OCI-LY7 (cell line): ENCODE measurements at regions of chrX and their contacts with region 1.

Region 1: DNA sequence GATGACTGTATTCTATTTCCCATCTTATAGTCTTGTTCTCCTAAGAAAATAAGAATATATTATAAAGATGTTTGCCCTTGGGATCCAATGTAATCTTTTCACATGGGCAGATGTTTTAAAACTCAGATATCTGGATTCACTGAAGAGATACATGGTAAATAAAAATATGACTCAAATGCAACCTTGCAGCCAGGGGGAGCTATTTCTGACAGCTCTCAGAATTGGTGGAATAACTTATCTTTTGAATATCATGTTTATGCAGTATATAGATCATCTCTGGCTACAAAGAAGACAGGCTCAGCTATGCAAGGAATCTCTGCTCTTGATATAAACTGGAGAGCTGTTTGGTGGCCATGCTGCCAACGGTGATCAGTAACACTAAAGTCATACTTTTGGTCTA is 274.7 kb downstream of the GLUD2 start:
- DNase-seq: peak; percentile 4
- H3K4me3 ChIP-seq: no peak overlapping the region
- H3K27ac ChIP-seq: no peak overlapping the region
- H3K4me1 ChIP-seq: no peaks in the 10 kb centered on the region
- CTCF ChIP-seq: peak; percentile 72

Region 2: DNA sequence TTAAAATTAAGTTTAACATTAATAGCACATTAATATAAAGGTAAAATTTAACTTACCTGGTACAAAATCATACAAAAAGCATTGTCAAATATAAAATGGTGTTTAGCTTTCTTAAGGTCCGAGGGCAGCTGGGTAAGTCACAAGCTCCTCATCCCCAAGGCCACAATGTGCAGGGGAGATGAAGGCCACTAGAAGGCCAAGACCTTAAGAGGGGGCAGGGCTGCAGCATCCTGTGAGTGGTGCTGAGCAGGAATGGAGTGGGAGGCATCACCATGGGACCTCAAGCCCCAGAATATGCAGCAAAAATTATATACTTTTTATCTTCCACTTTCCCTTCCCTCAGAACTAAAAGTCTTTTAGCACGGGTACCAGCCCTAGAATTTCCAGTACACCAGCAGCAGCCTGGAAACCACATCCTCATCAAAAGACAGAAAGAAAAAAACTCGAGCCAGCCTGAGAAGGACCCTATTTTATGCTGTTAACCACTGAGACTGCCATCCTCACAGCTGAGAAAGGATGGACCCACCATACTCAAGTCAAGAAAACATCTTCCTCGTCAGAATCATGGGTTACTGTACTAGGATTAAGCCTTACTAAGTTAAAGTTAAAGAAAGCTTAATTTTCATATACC is 1176.7 kb before region 1 on chrX:
- CTCF ChIA-PET with region 1: no interaction called
- POLR2A ChIA-PET with region 1: no interaction called
- intact Hi-C with region 1: no loop called
- DNase-seq: no peak
- H3K4me3 ChIP-seq: no peak overlapping the region
- H3K27ac ChIP-seq: no peak overlapping the region
- H3K4me1 ChIP-seq: no peaks in the 10 kb centered on the region
- CTCF ChIP-seq: no peak

Region 3: DNA sequence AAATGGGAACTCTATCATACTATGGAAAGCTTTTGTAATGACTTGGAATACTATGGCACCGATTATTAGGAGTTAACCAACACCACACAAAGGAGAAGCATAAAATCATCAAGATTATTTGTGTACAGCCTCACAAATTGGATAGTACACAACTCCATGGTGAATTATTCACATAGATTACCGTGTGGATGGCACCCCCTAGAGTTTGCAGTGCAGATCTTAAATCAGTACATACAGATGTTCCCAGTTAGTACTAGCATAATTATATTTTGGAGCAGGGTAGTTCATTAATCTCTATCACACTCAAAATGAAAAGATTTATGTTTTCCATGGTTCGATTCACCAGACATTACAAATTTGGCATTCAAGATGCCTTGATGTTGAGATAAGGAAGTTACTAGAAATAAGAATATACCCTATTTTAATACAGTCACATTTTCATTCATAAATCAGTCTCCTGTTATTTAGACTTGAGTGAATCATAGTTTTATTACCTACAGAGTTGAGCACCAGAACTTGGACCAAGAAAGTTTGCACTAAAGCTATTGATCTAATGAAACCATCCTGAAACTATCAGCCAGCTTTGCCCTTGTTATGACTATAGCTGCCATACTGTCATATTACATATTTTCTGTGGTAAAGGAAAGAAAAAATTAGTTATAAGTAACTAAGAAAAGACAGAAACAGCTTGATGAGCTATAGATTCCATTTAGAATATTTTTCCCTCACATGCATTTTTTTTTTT is 257.0 kb after region 1 on chrX:
- CTCF ChIA-PET with region 1: no interaction called
- POLR2A ChIA-PET with region 1: no interaction called
- intact Hi-C with region 1: loop called (anchors 5 kb)
- DNase-seq: peak; percentile 55
- H3K4me3 ChIP-seq: no peak overlapping the region
- H3K27ac ChIP-seq: no peak overlapping the region
- H3K4me1 ChIP-seq: no peaks in the 10 kb centered on the region
- CTCF ChIP-seq: peak; percentile 75